Prostate gland (tissue), 2 donors: ENCODE measurements at regions of chr15 and their contacts with region 1.

Region 1: DNA sequence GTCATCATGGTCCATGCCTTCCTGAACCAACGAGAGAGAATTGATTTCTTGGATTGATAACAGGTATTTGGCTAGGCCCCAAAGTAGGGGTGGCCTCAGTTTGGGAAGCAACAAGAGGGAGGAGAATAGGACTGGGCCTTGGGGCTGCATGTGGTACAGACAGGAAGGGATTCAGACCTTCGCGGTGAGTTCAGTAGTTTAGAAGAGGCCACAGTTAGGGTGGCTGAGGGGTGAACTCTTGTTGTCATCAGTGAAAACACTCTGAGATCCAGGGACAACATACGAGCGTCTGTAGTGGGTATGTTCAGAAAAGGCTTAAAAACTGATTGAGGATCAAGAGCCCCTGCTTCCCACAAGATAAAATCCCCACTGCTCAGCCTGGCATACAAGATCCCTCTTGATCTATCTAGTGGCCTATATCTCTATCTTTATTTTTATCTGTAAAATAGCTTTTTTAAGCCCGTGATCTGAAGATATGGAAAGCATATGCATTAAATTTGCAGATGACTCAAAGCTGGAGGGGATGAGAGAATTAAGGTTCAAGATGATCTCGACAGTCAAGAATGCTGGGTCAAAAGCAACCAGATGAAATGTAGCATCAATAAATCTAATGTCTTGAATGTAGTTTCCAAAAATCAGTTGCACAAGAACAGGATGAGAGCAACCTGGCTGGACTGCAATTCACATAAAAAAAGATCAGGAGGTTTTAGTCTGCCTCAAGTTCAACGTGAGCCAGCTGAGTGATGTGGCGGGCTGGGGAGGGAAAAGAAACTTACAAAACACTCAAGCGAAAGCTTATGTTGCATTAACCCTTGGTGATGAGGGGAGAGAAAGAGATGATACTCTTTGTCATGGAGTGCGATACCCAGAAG is 221.1 kb upstream of the TLE3 start:
- DNase-seq: peak; percentile 48
- H3K4me3 ChIP-seq: no peak overlapping the region
- H3K27ac ChIP-seq: peak overlapping the region; percentile 24 to 38
- H3K4me1 ChIP-seq: peaks cover 23% of the 10 kb centered on the region
- H3K27me3 ChIP-seq: no peaks in the 10 kb centered on the region
- CTCF ChIP-seq: no peak
- POLR2A ChIP-seq: no peak

Region 2: DNA sequence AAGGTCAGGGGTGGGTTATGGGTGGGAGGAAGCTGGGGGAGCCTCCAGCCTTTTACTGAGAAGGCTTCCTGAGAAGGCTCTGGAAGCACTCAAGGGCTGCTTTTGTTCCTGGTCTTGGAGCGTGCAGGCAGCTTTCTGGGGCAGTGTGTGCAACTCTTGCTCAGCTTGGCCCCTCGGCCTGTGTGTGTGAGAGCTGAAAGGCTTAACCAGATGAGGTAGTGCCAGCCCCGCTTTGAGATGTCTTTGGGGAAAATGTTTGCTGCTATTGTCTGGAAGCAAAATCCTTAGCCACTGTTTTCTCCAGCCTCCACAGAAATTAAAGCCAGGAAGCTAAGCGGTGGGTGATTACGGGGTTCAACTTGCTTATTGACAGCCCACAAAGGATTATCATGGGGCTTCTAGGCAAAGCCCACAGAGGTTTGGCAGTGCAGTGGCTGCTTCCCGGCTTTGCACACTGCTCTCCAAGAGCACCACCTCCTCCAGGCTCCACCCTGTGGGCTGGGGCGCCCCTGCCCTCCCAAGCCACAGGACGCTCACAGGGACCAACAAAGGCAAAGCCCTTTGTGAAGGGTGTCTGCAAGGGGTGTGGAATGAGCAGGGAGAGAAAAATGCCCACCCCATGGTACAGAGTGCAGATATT is 99.5 kb before region 1 on chr15:
- intact Hi-C with region 1: no loop called
- DNase-seq: no peak
- H3K4me3 ChIP-seq: no peak overlapping the region
- H3K27ac ChIP-seq: no peak overlapping the region
- H3K4me1 ChIP-seq: no peaks in the 10 kb centered on the region
- H3K27me3 ChIP-seq: no peaks in the 10 kb centered on the region
- CTCF ChIP-seq: no peak
- POLR2A ChIP-seq: no peak

Region 3: DNA sequence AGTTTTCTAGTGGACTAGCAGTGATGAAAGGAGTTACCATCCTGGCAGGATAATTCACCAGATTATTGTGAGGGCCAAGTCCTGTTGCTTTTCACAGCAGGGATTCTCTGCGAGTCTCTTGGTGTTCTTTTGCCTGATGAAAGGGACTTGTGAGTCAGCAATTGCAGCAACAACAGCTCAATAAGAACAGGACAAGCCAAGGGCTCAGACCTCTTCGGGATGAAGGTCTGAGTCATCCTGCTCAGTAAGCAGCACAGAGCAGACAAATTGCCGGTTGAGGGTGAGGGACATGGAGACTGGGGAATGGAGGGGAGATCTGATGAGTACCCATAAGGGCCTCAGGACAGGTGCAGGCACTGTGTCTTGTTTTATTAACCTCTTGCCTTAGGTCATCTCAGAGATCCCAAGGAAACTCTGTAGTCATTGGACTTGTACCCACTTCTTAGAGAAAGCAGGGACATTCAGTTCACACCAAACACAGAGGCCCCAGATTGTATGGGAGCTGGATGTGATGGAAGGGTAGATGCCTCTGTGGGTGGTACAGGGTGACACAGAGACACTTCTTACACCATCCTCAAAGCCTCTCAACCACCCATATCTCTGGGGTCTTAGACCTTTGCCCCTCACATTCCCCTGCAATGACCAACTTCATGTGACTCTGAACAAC is 47.3 kb before region 1 on chr15:
- intact Hi-C with region 1: loop called (anchors 5 kb)
- DNase-seq: no peak
- H3K4me3 ChIP-seq: no peak overlapping the region
- H3K27ac ChIP-seq: peak overlapping the region; percentile 33 to 44
- H3K4me1 ChIP-seq: no peaks in the 10 kb centered on the region
- H3K27me3 ChIP-seq: no peaks in the 10 kb centered on the region
- CTCF ChIP-seq: no peak
- POLR2A ChIP-seq: no peak

Region 4: GRCh38 chr15:70669006-70669602 is 350.3 kb after region 1 on chr15:
- intact Hi-C with region 1: no loop called
- DNase-seq: no peak
- H3K4me3 ChIP-seq: no peak overlapping the region
- H3K27ac ChIP-seq: no peak overlapping the region
- H3K4me1 ChIP-seq: peaks cover 3% of the 10 kb centered on the region
- H3K27me3 ChIP-seq: no peaks in the 10 kb centered on the region
- CTCF ChIP-seq: no peak
- POLR2A ChIP-seq: no peak